ENCODE measurements at regions of chr4 and their contacts with region 1.

Region 1: GRCh38 chr4:64911846-64912245 is 502.6 kb upstream of the TECRL start:
- DNase-seq: no peak
- H3K4me3 ChIP-seq: no peak overlapping the region
- H3K4me3 Mint-ChIP-seq: no peak overlapping the region
- H3K27ac Mint-ChIP-seq: no peak overlapping the region
- H3K4me1 ChIP-seq: no peaks in the 10 kb centered on the region
- H3K4me1 Mint-ChIP-seq: no peaks in the 10 kb centered on the region
- H3K27me3 ChIP-seq: no peaks in the 10 kb centered on the region
- H3K27me3 Mint-ChIP-seq: no peaks in the 10 kb centered on the region
- CTCF ChIP-seq: no peak

Region 2: DNA sequence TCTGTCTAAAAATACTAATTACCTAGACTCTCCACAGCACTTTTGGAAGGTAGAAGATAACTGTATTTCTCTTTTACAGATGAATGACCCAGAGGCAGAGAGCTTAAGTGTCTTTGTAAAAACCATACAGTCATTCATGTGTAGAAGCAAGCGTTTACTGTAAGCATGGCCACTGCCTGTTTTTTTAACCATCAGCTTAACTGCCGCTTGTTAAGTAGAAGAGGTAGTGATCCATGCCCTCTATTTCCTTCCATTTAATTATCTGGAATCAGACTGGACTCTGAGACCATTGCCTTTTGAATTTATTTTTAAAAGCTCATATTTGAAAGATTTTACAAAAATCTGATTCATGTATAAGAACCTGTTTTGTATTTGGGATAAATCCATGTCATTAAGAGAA is 391.4 kb before region 1 on chr4:
- CTCF ChIA-PET with region 1: no interaction called
- POLR2A ChIA-PET with region 1: no interaction called
- intact Hi-C with region 1: no loop called
- DNase-seq: no peak
- H3K4me3 ChIP-seq: no peak overlapping the region
- H3K4me3 Mint-ChIP-seq: no peak overlapping the region
- H3K27ac Mint-ChIP-seq: no peak overlapping the region
- H3K4me1 ChIP-seq: no peaks in the 10 kb centered on the region
- H3K4me1 Mint-ChIP-seq: no peaks in the 10 kb centered on the region
- H3K27me3 ChIP-seq: no peaks in the 10 kb centered on the region
- H3K27me3 Mint-ChIP-seq: no peaks in the 10 kb centered on the region
- CTCF ChIP-seq: no peak

Region 3: DNA sequence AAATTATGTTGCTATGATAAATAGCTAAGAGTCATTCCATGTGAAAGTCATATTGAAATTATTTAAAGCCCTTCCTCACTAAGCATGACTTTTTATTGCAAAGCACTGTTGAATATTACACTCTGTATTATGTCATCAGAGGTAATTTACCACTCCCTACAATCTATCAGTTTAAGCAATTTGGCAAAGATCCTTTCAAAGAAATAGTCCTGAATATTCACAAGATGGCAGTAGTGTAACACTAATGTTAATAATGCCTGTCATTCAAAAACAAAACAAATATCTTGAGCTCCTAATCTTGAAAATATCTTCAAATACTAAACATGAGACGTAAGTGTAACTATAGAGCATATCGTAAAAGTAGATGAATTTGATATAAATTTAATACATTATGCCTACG is 294.0 kb before region 1 on chr4:
- CTCF ChIA-PET with region 1: no interaction called
- POLR2A ChIA-PET with region 1: no interaction called
- intact Hi-C with region 1: loop called (anchors 5 kb)
- DNase-seq: no peak
- H3K4me3 ChIP-seq: no peak overlapping the region
- H3K4me3 Mint-ChIP-seq: no peak overlapping the region
- H3K27ac Mint-ChIP-seq: no peak overlapping the region
- H3K4me1 ChIP-seq: no peaks in the 10 kb centered on the region
- H3K4me1 Mint-ChIP-seq: no peaks in the 10 kb centered on the region
- H3K27me3 ChIP-seq: no peaks in the 10 kb centered on the region
- H3K27me3 Mint-ChIP-seq: no peaks in the 10 kb centered on the region
- CTCF ChIP-seq: no peak

Region 4: DNA sequence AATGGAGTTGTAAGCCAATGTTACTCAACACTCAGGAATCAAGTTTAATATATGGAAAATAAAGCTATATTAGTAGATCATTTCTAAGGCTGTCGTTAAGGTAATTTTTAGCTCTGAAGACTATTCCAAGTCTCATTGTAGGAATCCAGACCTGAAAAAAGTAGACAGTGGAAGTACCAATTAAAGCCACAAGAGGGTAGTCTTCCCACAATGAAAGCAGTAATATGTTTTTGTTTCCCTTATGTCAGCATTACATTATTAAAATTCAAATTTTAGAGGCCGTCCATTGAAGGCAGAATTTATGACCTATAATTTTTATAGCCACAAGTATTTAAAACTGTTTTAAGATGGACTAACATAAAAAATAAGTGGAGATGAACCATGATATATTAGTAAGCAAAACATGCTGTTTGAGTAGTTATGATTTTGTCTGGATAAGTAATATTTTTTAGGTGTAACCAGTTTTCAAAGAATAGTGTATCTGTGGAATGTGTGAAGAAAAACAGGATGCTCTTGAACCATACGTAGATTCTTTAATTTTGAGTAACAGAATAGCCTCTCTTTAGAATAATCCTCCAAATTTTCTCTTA is 130.0 kb before region 1 on chr4:
- CTCF ChIA-PET with region 1: no interaction called
- POLR2A ChIA-PET with region 1: no interaction called
- intact Hi-C with region 1: loop called (anchors 5 kb)
- DNase-seq: peak in 1 of 2 experiments; percentile 28
- H3K4me3 ChIP-seq: no peak overlapping the region
- H3K4me3 Mint-ChIP-seq: no peak overlapping the region
- H3K27ac Mint-ChIP-seq: no peak overlapping the region
- H3K4me1 ChIP-seq: no peaks in the 10 kb centered on the region
- H3K4me1 Mint-ChIP-seq: no peaks in the 10 kb centered on the region
- H3K27me3 ChIP-seq: no peaks in the 10 kb centered on the region
- H3K27me3 Mint-ChIP-seq: no peaks in the 10 kb centered on the region
- CTCF ChIP-seq: peak; percentile 51 to 61

Measured in Caco-2 (cell line).